ENCODE measurements at regions of chr2 and their contacts with region 1.

Region 1: DNA sequence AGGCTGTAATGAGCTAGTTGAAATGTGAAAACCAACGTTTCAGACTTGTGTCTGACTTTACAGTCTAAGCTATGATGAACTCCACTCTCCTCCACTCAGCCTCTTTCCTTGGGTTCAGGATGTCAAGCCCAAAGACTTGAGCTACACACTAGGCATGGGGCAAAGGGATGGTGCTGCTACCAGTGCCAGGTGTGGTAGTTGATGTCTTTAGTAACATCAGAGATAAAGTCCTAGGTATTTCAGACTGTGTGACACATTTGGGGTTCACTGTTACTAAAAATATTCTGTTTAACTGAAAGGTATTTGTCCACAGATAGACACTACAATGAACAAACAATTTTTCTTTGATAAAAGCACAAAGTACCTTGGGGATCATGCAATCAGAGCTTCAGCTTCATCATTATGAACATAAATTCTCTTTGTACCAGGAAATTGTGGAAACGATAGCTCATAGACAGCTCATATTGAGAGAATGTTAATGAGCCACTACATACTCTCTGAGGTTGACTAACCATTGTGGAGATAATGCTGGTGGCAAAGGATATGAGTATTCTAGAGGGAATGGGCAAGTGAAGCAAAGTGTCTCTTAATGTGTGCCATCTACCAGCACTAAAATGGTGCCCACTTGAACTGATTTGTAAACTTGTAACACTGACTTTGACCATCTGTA is 253.7 kb upstream of the THUMPD2 start:
- DNase-seq: peak; percentile 92
- ATAC-seq: peak; percentile 67
- H3K4me3 ChIP-seq: no peak overlapping the region
- H3K27ac ChIP-seq: peak overlapping the region; percentile 98
- H3K4me1 ChIP-seq: peaks cover 19% of the 10 kb centered on the region
- H3K27me3 ChIP-seq: no peaks in the 10 kb centered on the region
- CTCF ChIP-seq: no peak
- POLR2A ChIP-seq: no peak
- RAD21 ChIP-seq: no peak

Region 2: DNA sequence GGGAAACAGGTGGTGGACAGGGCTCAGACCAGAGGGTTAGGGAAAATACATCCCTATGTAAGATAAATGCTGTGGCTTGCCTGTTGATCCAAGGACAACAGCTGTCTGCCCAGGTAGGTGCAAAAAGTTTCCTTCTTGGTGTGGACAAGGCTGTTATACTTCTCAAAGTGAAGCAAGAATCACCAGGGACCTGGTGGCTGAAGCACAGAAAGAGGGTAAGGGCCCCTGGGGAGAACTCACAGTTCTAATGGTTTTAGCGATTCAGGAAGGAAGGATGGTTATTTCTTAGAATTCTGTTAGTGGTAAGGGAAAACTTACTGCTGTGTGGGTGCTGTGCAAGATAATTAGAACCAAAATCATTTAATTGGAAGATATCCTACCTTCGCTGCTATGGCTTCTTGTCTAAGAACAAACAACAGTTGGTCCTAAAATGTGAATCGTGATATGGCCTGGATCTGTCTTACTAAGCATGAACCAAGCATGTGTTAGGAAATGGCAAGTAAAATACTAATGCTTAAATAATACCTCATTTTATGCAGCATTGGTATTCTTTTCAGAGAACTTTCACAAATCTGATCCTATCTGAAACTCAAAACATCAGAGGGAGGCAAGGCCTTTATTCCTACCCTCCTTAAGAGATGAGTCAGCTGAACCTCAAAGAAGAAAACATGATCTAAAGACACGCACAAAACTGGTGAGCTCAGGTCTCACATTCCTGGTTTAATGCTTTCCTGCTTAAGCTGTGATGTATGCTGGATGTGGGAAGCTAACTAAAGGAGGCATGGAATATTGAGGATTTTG is 94.5 kb before region 1 on chr2:
- CTCF ChIA-PET with region 1: no interaction called
- POLR2A ChIA-PET with region 1: no interaction called
- dilution Hi-C with region 1: no loop called
- in situ Hi-C with region 1: no loop called
- intact Hi-C with region 1: loop called (anchors 5 kb)
- DNase-seq: peak; percentile 97
- ATAC-seq: peak; percentile 95
- H3K4me3 ChIP-seq: no peak overlapping the region
- H3K27ac ChIP-seq: peak overlapping the region; percentile 97
- H3K4me1 ChIP-seq: peaks cover 10% of the 10 kb centered on the region
- H3K27me3 ChIP-seq: no peaks in the 10 kb centered on the region
- CTCF ChIP-seq: no peak
- POLR2A ChIP-seq: no peak
- RAD21 ChIP-seq: 0 out of 2 replicates have a peak, but pooled peaks have one; percentile 10

Region 3: GRCh38 chr2:40325116-40325515 is 292.3 kb after region 1 on chr2:
- CTCF ChIA-PET with region 1: no interaction called
- POLR2A ChIA-PET with region 1: no interaction called
- dilution Hi-C with region 1: no loop called
- in situ Hi-C with region 1: no loop called
- intact Hi-C with region 1: no loop called
- DNase-seq: no peak
- ATAC-seq: no peak
- H3K4me3 ChIP-seq: no peak overlapping the region
- H3K27ac ChIP-seq: no peak overlapping the region
- H3K4me1 ChIP-seq: peaks cover 8% of the 10 kb centered on the region
- H3K27me3 ChIP-seq: no peaks in the 10 kb centered on the region
- CTCF ChIP-seq: no peak
- POLR2A ChIP-seq: no peak
- RAD21 ChIP-seq: no peak